MCF 10A (cell line): ENCODE measurements at regions of chr1 and their contacts with region 1.

Region 1: GRCh38 chr1:111747282-111747734 is 8.1 kb upstream of the INKA2 start:
- DNase-seq: peak; percentile 89
- H3K4me3 Mint-ChIP-seq: no peak overlapping the region
- H3K27ac Mint-ChIP-seq: no peak overlapping the region
- H3K4me1 Mint-ChIP-seq: no peaks in the 10 kb centered on the region
- H3K27me3 Mint-ChIP-seq: no peaks in the 10 kb centered on the region
- CTCF ChIP-seq: peak; percentile 61

Region 2: GRCh38 chr1:111733183-111733991 is 13.9 kb before region 1 on chr1:
- CTCF ChIA-PET with region 1: interaction called, 11 read pairs
- POLR2A ChIA-PET with region 1: interaction called, 16 read pairs
- intact Hi-C with region 1: no loop called
- DNase-seq: peak; percentile 31
- H3K4me3 Mint-ChIP-seq: no peak overlapping the region
- H3K27ac Mint-ChIP-seq: no peak overlapping the region
- H3K4me1 Mint-ChIP-seq: peaks cover 12% of the 10 kb centered on the region
- H3K27me3 Mint-ChIP-seq: no peaks in the 10 kb centered on the region
- CTCF ChIP-seq: no peak

Region 3: GRCh38 chr1:111801071-111801841 is 53.9 kb after region 1 on chr1:
- CTCF ChIA-PET with region 1: no interaction called
- POLR2A ChIA-PET with region 1: no interaction called
- intact Hi-C with region 1: no loop called
- DNase-seq: peak; percentile 4
- H3K4me3 Mint-ChIP-seq: no peak overlapping the region
- H3K27ac Mint-ChIP-seq: no peak overlapping the region
- H3K4me1 Mint-ChIP-seq: no peaks in the 10 kb centered on the region
- H3K27me3 Mint-ChIP-seq: peaks cover 30% of the 10 kb centered on the region
- CTCF ChIP-seq: no peak